ENCODE measurements at regions of chr22 and their contacts with region 1.

Region 1: GRCh38 chr22:35582861-35583670 is 34.1 kb downstream of the MB start:
- DNase-seq: peak; percentile 36 to 63 (median 41)
- H3K4me3 ChIP-seq: no peak overlapping the region
- H3K4me3 Mint-ChIP-seq: no peak overlapping the region
- H3K27ac ChIP-seq: no peak overlapping the region
- H3K27ac Mint-ChIP-seq: no peak overlapping the region
- H3K4me1 ChIP-seq: no peaks in the 10 kb centered on the region
- H3K4me1 Mint-ChIP-seq: no peaks in the 10 kb centered on the region
- H3K27me3 ChIP-seq: no peaks in the 10 kb centered on the region
- H3K27me3 Mint-ChIP-seq: peaks cover 0 to 8% of the 10 kb centered on the region in 2 donors

Region 2: DNA sequence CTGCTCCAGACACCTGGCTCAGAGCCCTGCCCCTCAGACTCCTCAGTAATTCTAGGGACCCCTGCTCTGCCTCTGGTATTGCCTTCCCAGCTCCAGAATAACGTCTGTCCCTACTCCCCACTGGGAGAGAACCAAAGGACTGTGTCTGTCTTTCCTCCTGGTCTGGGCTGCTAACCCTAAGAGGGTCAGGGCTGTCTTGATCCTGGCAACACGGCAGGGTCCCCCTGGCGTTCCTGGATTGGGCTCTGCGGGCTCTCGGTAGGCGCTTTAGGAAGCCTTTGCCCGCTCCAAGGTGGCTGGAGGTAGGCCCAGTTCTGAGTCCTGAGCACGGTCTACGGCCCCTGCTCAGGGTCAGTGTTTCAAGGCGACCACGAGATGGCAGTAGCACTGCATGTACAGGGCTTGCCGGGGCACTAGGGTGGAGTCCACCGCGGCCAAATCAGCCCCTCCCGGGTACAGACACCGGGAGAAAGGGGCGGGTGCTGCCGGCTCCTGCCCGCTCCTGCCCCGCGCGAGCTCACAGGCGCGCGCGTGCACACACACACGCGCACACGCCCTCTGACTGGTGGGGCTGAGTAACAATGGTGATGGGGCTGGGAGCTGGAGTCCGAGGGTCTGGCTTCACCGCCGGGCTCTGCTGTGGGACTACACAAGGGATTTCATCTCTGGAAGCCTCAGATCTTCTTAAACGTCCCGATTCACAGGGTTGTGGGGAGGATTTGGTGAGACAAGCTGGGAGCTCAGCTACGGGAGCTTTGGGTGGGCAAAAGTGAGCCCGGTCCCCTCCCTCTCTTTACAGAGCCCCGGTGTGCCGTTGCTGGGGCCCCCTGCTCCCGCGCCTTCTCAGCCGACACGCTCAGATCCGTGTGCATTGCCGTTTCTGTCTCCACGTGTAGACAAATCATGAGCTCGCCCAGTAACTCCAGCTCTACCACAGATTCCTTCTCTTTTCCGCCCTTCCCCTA is 232.2 kb before region 1 on chr22:
- CTCF ChIA-PET with region 1: interaction called, 37 read pairs
- POLR2A ChIA-PET with region 1: no interaction called
- DNase-seq: peak; percentile 74 to 89 (median 80)
- H3K4me3 ChIP-seq: peak overlapping the region; percentile 74
- H3K4me3 Mint-ChIP-seq: peak overlapping the region; percentile 55 to 92 (median 82)
- H3K27ac ChIP-seq: peak overlapping the region; percentile 27
- H3K27ac Mint-ChIP-seq: peak overlapping the region in 6 of 8 donors; percentile 4 to 83 (median 42)
- H3K4me1 ChIP-seq: peaks cover 16% of the 10 kb centered on the region
- H3K4me1 Mint-ChIP-seq: peaks cover 16 to 31% (median 16%) of the 10 kb centered on the region in 3 donors
- H3K27me3 ChIP-seq: no peaks in the 10 kb centered on the region
- H3K27me3 Mint-ChIP-seq: peaks cover 5 to 19% of the 10 kb centered on the region in 2 donors